ENCODE measurements at regions of chr9 and their contacts with region 1.

Region 1: GRCh38 chr9:136644598-136645351 is 17.9 kb upstream of the EGFL7 start:
- DNase-seq: peak; percentile 91
- ATAC-seq: peak; percentile 60

Region 2: GRCh38 chr9:136655536-136656182 is 10.9 kb after region 1 on chr9:
- intact Hi-C with region 1: loop called (anchors 1 kb)
- DNase-seq: no peak
- ATAC-seq: peak; percentile 37

Region 3: DNA sequence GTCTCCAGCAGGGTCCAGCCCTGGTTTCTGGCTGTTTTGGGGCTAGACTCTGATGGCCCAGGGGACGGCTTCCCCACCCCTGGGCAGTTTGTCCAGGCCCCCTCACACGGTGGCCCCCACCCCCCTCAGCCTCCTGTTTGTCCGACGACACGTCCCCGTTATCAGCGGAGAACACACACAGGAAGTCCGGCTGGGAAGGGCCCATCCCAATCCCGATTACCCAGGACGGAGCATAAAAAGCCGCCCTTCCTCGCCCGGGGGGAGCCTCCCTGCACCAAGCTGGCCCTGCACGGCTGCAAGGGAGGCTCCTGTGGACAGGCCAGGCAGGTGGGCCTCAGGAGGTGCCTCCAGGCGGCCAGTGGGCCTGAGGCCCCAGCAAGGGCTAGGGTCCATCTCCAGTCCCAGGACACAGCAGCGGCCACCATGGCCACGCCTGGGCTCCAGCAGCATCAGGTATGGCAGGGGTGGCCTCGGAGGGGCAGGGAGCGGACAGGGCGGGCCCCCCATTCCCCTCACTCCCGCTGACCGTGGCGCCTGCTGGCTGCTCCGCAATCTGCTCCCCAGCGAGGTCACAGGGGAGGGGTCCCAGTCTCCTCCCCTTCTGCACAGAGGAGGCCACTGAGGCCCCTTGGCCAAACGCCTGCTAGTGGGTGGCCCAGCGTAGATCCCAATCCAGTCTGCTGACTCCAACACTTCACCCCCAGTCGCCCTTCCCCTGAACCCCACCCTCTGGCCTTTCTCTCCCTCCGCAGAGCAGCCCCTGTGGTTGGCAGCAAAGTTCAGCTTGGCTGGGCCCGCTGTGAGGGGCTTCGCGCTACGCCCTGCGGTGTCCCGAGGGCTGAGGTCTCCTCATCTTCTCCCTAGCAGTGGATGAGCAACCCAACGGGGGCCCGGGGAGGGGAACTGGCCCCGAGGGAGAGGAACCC is 18.1 kb after region 1 on chr9 and contains the start of gene EGFL7:
- intact Hi-C with region 1: loop called (anchors 2 kb)
- DNase-seq: peak; percentile 73
- ATAC-seq: peak; percentile 24
- total RNA-seq, gene EGFL7: 72.0 TPM

Region 4: GRCh38 chr9:136694236-136694942 is 49.6 kb after region 1 on chr9:
- intact Hi-C with region 1: loop called (anchors 5 kb)
- DNase-seq: no peak
- ATAC-seq: peak; percentile 30

Measured in Right ventricle myocardium inferior (tissue), 1 donor.